Stomach (tissue), 19 donors: ENCODE measurements at regions of chr6 and their contacts with region 1.

Region 1: GRCh38 chr6:41675176-41675770 is 37.0 kb downstream of the MDFI start:
- DNase-seq: peak in 1 of 2 donors; percentile 36
- H3K4me3 ChIP-seq: no peak overlapping the region
- H3K27ac ChIP-seq: no peak overlapping the region
- H3K4me1 ChIP-seq: no peaks in the 10 kb centered on the region
- H3K27me3 ChIP-seq: peaks cover 0 to 17% (median 0%) of the 10 kb centered on the region in 3 donors
- CTCF ChIP-seq: no peak
- EP300 ChIP-seq: no peak
- POLR2A ChIP-seq: no peak

Region 2: GRCh38 chr6:41371461-41371991 is 303.7 kb before region 1 on chr6:
- intact Hi-C with region 1: loop called (anchors 5 kb)
- DNase-seq: peak; percentile 70 to 84
- H3K4me3 ChIP-seq: peak overlapping the region; percentile 36 to 54 (median 42)
- H3K27ac ChIP-seq: peak overlapping the region; percentile 44 to 77 (median 64)
- H3K4me1 ChIP-seq: peaks cover 47 to 65% (median 57%) of the 10 kb centered on the region in 4 donors
- H3K27me3 ChIP-seq: peaks cover 16 to 92% (median 57%) of the 10 kb centered on the region in 3 donors
- CTCF ChIP-seq: peak in 5 of 7 experiments; percentile 21 to 42 (median 37)
- EP300 ChIP-seq: no peak
- POLR2A ChIP-seq: no peak

Region 3: GRCh38 chr6:42131531-42131930 is 456.3 kb after region 1 on chr6:
- intact Hi-C with region 1: no loop called
- DNase-seq: no peak
- H3K4me3 ChIP-seq: no peak overlapping the region
- H3K27ac ChIP-seq: peak overlapping the region in 1 of 5 donors; percentile 26
- H3K4me1 ChIP-seq: peaks cover 36 to 55% (median 43%) of the 10 kb centered on the region in 4 donors
- H3K27me3 ChIP-seq: no peaks in the 10 kb centered on the region
- CTCF ChIP-seq: no peak
- EP300 ChIP-seq: no peak
- POLR2A ChIP-seq: no peak